T-cell (primary cell): ENCODE measurements at regions of chr4 and their contacts with region 1.

Region 1: DNA sequence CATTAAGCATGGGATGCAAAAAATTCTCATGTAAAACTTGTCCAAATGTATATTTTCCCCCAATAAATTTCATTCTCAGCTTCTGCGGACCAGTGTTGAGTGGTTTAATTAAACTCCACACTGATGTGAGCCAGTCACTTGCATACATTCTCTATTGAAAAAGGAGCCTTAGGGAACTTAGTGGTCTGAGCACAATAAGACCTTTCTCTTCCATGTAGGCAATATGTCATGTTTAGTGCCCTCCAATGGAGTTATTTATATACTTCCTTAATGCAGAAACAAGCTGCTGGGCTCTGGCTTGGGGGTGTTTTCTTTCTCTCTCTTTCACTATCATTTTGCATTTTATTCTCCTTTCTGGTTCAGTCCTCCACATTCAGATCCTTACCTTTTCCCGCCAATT is 196.9 kb downstream of the ANAPC10 start:
- DNase-seq: no peak
- ATAC-seq: no peak
- H3K4me3 ChIP-seq: no peak overlapping the region
- H3K4me3 Mint-ChIP-seq: no peak overlapping the region
- H3K27ac ChIP-seq: no peak overlapping the region
- H3K27ac Mint-ChIP-seq: no peak overlapping the region
- H3K4me1 ChIP-seq: no peaks in the 10 kb centered on the region
- H3K4me1 Mint-ChIP-seq: no peaks in the 10 kb centered on the region
- H3K27me3 ChIP-seq: no peaks in the 10 kb centered on the region
- H3K27me3 Mint-ChIP-seq: no peaks in the 10 kb centered on the region

Region 2: DNA sequence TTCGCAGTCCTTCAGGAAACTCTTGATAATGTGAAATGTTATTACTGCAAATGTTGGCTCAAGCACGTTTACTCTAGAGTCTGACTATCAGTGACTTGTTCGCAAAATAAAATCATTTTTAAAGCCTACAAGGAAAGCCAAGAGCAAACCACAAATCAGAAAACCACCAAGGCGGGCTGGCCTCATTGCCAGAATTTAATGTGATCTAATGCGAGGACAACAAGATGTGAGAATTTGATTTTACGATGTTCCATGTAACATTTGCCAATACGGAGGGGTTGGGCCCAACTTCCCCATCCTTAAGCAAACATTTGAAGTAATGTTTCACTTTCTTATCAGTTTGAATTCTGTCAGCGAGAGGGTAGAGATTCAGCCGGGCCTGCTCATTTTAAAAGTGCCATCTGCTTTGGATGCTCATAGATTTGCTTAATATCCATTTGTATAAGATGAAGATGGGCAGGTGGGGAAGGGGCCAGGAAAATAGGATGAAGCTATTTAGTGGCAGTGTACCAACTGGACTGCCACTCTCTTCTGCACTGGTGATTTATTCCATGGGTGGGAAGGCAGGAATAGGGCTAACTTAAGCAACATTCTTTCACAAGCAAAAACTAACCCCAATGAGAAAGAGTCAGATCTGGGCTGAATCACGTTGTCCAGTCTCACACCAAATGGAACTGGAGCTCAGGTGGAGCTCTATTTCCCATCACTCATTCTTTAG is 28.5 kb before region 1 on chr4:
- CTCF ChIA-PET with region 1: interaction called, 3 to 10 read pairs
- POLR2A ChIA-PET with region 1: no interaction called
- DNase-seq: no peak
- ATAC-seq: no peak
- H3K4me3 ChIP-seq: no peak overlapping the region
- H3K4me3 Mint-ChIP-seq: no peak overlapping the region
- H3K27ac ChIP-seq: no peak overlapping the region
- H3K27ac Mint-ChIP-seq: no peak overlapping the region
- H3K4me1 ChIP-seq: no peaks in the 10 kb centered on the region
- H3K4me1 Mint-ChIP-seq: no peaks in the 10 kb centered on the region
- H3K27me3 ChIP-seq: no peaks in the 10 kb centered on the region
- H3K27me3 Mint-ChIP-seq: no peaks in the 10 kb centered on the region